ENCODE measurements at regions of chr3 and their contacts with region 1.

Region 1: GRCh38 chr3:152961323-152961722 is 126.4 kb downstream of the P2RY1 start:
- DNase-seq: peak; percentile 50

Region 2: GRCh38 chr3:152524198-152525140 is 436.9 kb before region 1 on chr3:
- in situ Hi-C with region 1: loop called (anchors 25 kb)
- DNase-seq: peak; percentile 72

Region 3: GRCh38 chr3:153443961-153444360 is 482.6 kb after region 1 on chr3:
- in situ Hi-C with region 1: no loop called
- DNase-seq: peak; percentile 28